ENCODE measurements at regions of chr7 and their contacts with region 1.

Region 1: DNA sequence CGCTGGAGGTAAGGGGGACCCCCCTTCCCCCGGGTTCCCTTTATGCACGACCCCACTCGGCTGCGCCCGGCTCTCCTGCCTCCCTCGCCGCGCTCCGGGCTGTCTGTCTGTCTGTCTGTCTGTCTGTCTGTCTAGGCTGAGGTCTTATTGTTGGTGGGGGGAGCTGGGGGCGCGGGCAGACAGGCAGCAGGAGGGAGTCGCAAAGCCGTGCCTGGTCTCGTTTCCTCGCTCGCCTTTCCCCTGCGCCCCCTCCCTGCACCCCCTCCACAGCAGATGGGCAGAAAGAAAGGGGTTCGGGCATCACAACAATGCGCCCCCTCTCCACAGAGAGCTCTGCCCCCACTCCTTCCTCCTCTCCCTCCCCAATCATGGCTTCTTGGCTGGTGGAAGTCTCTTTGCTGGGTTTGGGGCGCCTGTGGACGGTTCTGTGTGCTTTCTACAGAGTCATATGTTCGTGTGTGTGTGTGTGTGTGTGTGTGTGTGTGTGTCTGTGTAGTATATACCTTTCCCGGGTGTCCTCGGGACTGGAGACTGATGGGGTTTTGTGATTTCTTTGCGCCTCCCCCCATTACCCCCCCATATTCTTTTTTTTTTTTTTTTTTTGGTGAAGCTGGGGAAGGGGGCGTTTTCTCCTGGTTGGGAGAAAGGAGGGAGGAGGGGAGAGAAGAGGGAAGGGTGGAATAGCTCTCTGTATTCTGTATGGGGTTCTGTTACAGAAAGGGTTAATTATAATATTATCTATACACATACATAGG is 1.9 kb downstream of the AUTS2 start:
- H3K4me3 ChIP-seq: peak overlapping the region; percentile 89
- H3K27ac ChIP-seq: peak overlapping the region; percentile 98
- H3K4me1 ChIP-seq: peaks cover 38% of the 10 kb centered on the region
- CTCF ChIP-seq: 0 out of 2 replicates have a peak, but pooled peaks have one; percentile 25

Region 2: GRCh38 chr7:69654849-69655716 is 55.0 kb after region 1 on chr7:
- CTCF ChIA-PET with region 1: interaction called, 6 read pairs
- POLR2A ChIA-PET with region 1: interaction called, 12 read pairs
- H3K4me3 ChIP-seq: no peak overlapping the region
- H3K27ac ChIP-seq: peak overlapping the region; percentile 29; the same call in 1 of the 2 replicates
- H3K4me1 ChIP-seq: peaks cover 58% of the 10 kb centered on the region
- CTCF ChIP-seq: no peak